ENCODE measurements at regions of chr2 and their contacts with region 1.

Region 1: DNA sequence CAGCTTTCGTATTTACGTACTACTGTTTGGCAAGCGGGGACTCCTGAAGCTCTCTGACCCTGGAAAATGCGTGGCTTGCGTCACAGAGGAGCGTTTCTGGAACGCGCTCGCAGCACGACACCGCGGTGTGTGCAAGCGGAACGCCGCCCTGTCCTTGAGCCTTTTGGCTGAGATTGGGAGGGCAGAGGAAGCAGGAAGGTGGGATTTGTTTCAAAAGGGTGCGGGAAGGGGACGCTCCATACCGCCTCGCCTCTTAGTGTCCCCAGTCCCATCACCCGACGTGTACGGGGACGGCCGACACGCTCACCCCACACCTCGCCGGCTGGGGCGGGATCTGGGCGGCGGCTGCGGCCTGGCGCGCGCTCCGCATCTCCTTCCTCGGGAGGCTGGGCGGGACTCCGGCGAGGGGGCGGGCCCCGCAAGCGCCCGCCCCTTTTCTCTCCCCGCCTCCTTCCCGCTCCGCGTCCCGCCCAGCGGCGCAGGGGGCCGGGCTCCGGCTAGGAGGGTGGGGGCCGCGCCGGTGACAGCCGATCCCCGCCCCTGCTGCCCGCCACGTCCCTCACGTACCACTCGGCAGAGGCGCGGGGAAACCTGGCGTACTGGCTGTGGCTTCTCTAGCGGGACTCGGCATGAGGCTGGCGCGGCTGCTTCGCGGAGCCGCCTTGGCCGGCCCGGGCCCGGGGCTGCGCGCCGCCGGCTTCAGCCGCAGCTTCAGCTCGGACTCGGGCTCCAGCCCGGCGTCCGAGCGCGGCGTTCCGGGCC is at the start of gene PDK1:
- DNase-seq: peak; percentile 94
- ATAC-seq: peak; percentile 90
- H3K4me3 ChIP-seq: peak within 1 kb of the TSS; percentile 80 to 96 (median 86)
- H3K4me3 Mint-ChIP-seq: peak within 1 kb of the TSS; percentile 98
- H3K27ac ChIP-seq: peak within 1 kb of the TSS; percentile 87 to 92
- H3K27ac Mint-ChIP-seq: peak within 1 kb of the TSS; percentile 97
- H3K4me1 ChIP-seq: peaks cover 20 to 25% of the 10 kb centered on the region in 2 donors
- H3K4me1 Mint-ChIP-seq: peaks cover 32% of the 10 kb centered on the region
- H3K27me3 ChIP-seq: no peaks in the 10 kb centered on the region
- H3K27me3 Mint-ChIP-seq: no peaks in the 10 kb centered on the region
- CTCF ChIP-seq: no peak
- total RNA-seq, gene PDK1: 25.5 and 33.6 TPM in 2 replicates

Region 2: DNA sequence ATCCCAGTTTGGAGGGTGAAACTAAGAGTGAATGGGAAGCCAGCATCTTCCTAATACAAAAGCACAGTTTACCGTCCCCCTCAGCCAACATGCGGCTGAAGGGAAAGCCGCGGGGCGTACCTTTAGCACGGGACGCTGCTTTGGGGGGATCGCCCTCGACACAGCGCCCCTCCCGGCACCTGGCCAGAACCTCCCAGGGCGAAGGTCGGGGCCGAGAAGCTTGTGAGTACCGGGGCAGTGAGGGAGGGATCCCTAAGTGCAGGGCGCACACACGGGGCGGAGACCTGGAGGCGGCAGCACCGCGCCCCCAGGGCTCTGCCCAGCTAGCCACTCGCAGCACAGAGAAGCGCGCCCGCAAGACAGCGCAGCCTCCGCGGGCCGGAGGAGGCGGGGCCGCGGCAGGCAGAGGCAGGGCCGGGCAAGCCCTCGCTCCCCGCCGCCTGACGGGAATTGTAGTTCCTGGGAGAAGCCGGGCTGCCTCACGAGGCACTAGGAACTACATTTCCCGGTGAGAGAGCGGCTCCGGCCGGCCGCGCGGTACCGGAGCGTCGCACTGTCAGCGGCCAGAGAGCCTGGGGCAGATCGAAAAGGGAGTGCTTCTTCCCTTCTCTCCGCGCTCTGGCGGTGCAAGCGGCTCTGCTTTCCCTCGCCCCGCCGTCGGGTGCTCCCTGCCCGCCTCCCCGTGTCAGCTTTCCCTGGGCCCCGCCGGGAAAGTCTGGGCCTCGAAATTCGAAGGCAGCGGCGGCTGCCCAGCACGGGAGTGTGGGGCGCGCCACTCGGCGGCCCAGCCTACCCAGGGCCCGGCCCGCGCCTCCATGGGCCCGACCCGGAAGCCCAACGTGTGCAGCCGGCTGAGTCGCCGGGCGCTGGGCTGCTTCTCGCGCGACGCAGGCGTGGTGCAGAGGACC is 1121.7 kb before region 1 on chr2 and contains the starts of genes DCAF17 and METTL8:
- CTCF ChIA-PET with region 1: no interaction called
- POLR2A ChIA-PET with region 1: no interaction called
- intact Hi-C with region 1: loop called (anchors 1 kb)
- DNase-seq: peak; percentile 96
- ATAC-seq: peak; percentile 89
- H3K4me3 ChIP-seq: peak within 1 kb of the TSS; percentile 67 to 87 (median 80)
- H3K4me3 Mint-ChIP-seq: peak within 1 kb of the TSS; percentile 91
- H3K27ac ChIP-seq: peak within 1 kb of the TSS; percentile 84 to 85
- H3K27ac Mint-ChIP-seq: peak within 1 kb of the TSS; percentile 96
- H3K4me1 ChIP-seq: peaks cover 7 to 10% of the 10 kb centered on the region in 2 donors
- H3K4me1 Mint-ChIP-seq: peaks cover 24% of the 10 kb centered on the region
- H3K27me3 ChIP-seq: no peaks in the 10 kb centered on the region
- H3K27me3 Mint-ChIP-seq: no peaks in the 10 kb centered on the region
- CTCF ChIP-seq: peak; percentile 61
- total RNA-seq, gene DCAF17: 27.9 and 29.4 TPM in 2 replicates
- total RNA-seq, gene METTL8: 57.8 and 58.6 TPM in 2 replicates

Region 3: GRCh38 chr2:171999604-172000469 is 555.9 kb before region 1 on chr2 and contains the start of gene METAP1D:
- CTCF ChIA-PET with region 1: no interaction called
- POLR2A ChIA-PET with region 1: no interaction called
- intact Hi-C with region 1: loop called (anchors 2 kb)
- DNase-seq: peak; percentile 90
- ATAC-seq: peak; percentile 94
- H3K4me3 ChIP-seq: peak within 1 kb of the TSS; percentile 55 to 93 (median 83)
- H3K4me3 Mint-ChIP-seq: peak within 1 kb of the TSS; percentile 98
- H3K27ac ChIP-seq: peak within 1 kb of the TSS; percentile 12 to 73
- H3K27ac Mint-ChIP-seq: peak within 1 kb of the TSS; percentile 93
- H3K4me1 ChIP-seq: peaks cover 13 to 14% of the 10 kb centered on the region in 2 donors
- H3K4me1 Mint-ChIP-seq: peaks cover 18% of the 10 kb centered on the region
- H3K27me3 ChIP-seq: peaks cover 0 to 3% (median 0%) of the 10 kb centered on the region in 4 experiments
- H3K27me3 Mint-ChIP-seq: peaks cover 6% of the 10 kb centered on the region
- CTCF ChIP-seq: no peak
- total RNA-seq, gene METAP1D: 8.2 and 8.9 TPM in 2 replicates

Region 4: DNA sequence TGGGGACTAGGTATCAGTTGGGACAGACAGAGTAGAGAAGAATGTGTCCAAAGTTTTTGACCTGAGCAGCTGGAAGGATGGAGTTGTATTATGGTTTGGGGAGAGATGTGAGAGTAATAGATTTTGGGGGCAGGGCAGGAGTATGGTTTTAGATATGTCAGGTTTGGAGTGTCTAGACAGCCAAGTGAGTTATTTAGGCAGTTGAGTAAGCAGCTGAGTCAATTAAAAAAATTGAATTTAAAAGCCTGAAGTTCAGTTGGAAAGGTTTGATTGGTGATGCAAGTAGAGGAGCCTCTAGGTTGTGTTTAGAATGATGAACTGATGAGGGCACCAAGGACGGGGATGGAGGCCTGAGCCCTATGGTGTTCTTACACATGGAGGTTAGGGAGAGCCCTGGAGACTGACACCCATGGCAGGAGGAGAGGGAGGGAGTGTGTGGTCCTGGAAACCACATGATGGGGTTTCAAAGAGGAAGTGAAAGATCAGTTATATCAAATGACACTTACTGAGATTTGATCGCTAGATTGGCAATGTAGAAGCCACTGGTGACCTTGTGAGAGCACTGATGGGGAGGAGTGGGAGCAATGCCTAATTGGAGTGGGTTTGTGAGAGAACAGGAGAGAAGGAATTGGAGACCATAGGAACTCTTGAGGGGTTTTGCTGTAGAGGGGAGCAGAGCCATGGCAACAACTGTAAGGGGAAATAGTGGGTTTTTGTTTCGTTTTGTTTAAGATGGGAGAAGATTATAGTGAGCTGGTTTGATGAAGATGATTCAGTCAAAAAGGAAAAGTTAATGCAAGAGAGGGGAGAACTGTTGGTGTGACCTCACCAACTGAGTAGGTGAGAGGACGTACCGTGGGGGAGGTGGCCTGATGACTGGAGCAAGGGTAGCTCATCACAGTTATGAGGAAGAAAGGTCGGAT is 118.0 kb before region 1 on chr2:
- CTCF ChIA-PET with region 1: no interaction called
- POLR2A ChIA-PET with region 1: no interaction called
- intact Hi-C with region 1: loop called (anchors 10 kb)
- DNase-seq: peak; percentile 74
- ATAC-seq: peak; percentile 86
- H3K4me3 ChIP-seq: peak overlapping the region in 4 of 5 experiments; percentile 32 to 68 (median 50)
- H3K4me3 Mint-ChIP-seq: no peak overlapping the region
- H3K27ac ChIP-seq: peak overlapping the region in 1 of 2 donors; percentile 38
- H3K27ac Mint-ChIP-seq: no peak overlapping the region
- H3K4me1 ChIP-seq: peaks cover 22 to 25% of the 10 kb centered on the region in 2 donors
- H3K4me1 Mint-ChIP-seq: peaks cover 5% of the 10 kb centered on the region
- H3K27me3 ChIP-seq: peaks cover 0 to 16% (median 7%) of the 10 kb centered on the region in 4 experiments
- H3K27me3 Mint-ChIP-seq: peaks cover 23% of the 10 kb centered on the region
- CTCF ChIP-seq: no peak

Region 5: GRCh38 chr2:174248187-174248997 is 1692.7 kb after region 1 on chr2 and contains the start of gene OLA1:
- CTCF ChIA-PET with region 1: no interaction called
- POLR2A ChIA-PET with region 1: no interaction called
- intact Hi-C with region 1: loop called (anchors 5 kb)
- DNase-seq: peak; percentile 94
- ATAC-seq: peak; percentile 97
- H3K4me3 ChIP-seq: peak within 1 kb of the TSS; percentile 47 to 91 (median 79)
- H3K4me3 Mint-ChIP-seq: peak within 1 kb of the TSS; percentile 91
- H3K27ac ChIP-seq: peak within 1 kb of the TSS; percentile 70 to 87
- H3K27ac Mint-ChIP-seq: peak within 1 kb of the TSS; percentile 85
- H3K4me1 ChIP-seq: peaks cover 12 to 17% of the 10 kb centered on the region in 2 donors
- H3K4me1 Mint-ChIP-seq: peaks cover 23% of the 10 kb centered on the region
- H3K27me3 ChIP-seq: peaks cover 0 to 4% (median 0%) of the 10 kb centered on the region in 4 experiments
- H3K27me3 Mint-ChIP-seq: peaks cover 8% of the 10 kb centered on the region
- CTCF ChIP-seq: no peak
- total RNA-seq, gene OLA1: 44.3 and 47.7 TPM in 2 replicates